Caco-2 (cell line): ENCODE measurements at regions of chr20 and their contacts with region 1.

Region 1: DNA sequence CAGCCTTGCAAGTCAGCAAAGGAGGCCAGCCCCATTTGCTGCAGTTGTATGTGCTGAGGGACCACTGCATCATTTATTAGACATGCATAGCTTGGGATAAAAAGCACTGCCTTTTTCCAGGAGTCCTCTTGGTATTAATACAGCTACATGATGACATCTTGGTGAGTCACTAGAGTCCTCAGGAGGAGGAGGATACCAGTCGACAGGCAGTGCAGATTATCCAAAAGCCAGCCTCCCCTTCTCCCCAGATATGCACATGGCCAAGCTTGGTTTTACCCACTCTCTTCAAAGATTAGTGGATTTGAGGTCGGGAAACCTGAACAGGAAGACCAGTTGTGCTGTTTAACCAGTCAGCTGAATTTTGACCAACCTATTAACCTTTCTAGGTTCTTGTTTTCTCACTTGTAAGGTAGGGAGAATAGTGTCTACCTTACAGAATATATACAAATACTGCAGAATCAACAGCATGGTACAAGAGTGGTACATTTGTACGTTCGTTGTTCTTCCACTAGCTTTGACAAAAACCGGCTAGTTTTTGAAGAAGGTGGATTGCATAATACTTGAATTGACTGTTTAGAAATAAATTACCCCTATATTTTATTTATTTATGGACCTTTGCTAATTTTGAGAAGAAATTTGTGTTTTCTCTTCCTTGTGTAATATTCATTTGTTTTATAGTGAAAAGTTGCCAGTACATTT is 31.9 kb downstream of the VAPB start:
- DNase-seq: peak in 1 of 2 experiments; percentile 28
- H3K4me3 ChIP-seq: no peak overlapping the region
- H3K4me3 Mint-ChIP-seq: peak overlapping the region; percentile 50
- H3K27ac Mint-ChIP-seq: peak overlapping the region; percentile 89
- H3K4me1 ChIP-seq: peaks cover 65% of the 10 kb centered on the region
- H3K4me1 Mint-ChIP-seq: peaks cover 70% of the 10 kb centered on the region
- H3K27me3 ChIP-seq: no peaks in the 10 kb centered on the region
- H3K27me3 Mint-ChIP-seq: no peaks in the 10 kb centered on the region
- CTCF ChIP-seq: no peak

Region 2: GRCh38 chr20:58372806-58373205 is 48.1 kb before region 1 on chr20:
- CTCF ChIA-PET with region 1: interaction called, 5 read pairs
- POLR2A ChIA-PET with region 1: no interaction called
- intact Hi-C with region 1: loop called (anchors 1 kb)
- DNase-seq: peak; percentile 91 to 95
- H3K4me3 ChIP-seq: no peak overlapping the region
- H3K4me3 Mint-ChIP-seq: peak overlapping the region; percentile 49
- H3K27ac Mint-ChIP-seq: peak overlapping the region; percentile 68
- H3K4me1 ChIP-seq: peaks cover 29% of the 10 kb centered on the region
- H3K4me1 Mint-ChIP-seq: peaks cover 37% of the 10 kb centered on the region
- H3K27me3 ChIP-seq: no peaks in the 10 kb centered on the region
- H3K27me3 Mint-ChIP-seq: no peaks in the 10 kb centered on the region
- CTCF ChIP-seq: no peak

Region 3: GRCh38 chr20:58398254-58398653 is 22.7 kb before region 1 on chr20:
- CTCF ChIA-PET with region 1: no interaction called
- POLR2A ChIA-PET with region 1: interaction called, 10 read pairs
- intact Hi-C with region 1: no loop called
- DNase-seq: no peak
- H3K4me3 ChIP-seq: no peak overlapping the region
- H3K4me3 Mint-ChIP-seq: no peak overlapping the region
- H3K27ac Mint-ChIP-seq: no peak overlapping the region
- H3K4me1 ChIP-seq: peaks cover 23% of the 10 kb centered on the region
- H3K4me1 Mint-ChIP-seq: peaks cover 19% of the 10 kb centered on the region
- H3K27me3 ChIP-seq: no peaks in the 10 kb centered on the region
- H3K27me3 Mint-ChIP-seq: no peaks in the 10 kb centered on the region
- CTCF ChIP-seq: no peak

Region 4: GRCh38 chr20:58571693-58572427 is 150.9 kb after region 1 on chr20:
- CTCF ChIA-PET with region 1: no interaction called
- POLR2A ChIA-PET with region 1: no interaction called
- intact Hi-C with region 1: loop called (anchors 1 kb)
- DNase-seq: peak; percentile 73 to 88
- H3K4me3 ChIP-seq: peak overlapping the region; percentile 10; the same call in 1 of the 2 replicates
- H3K4me3 Mint-ChIP-seq: peak overlapping the region; percentile 63
- H3K27ac Mint-ChIP-seq: peak overlapping the region; percentile 90
- H3K4me1 ChIP-seq: peaks cover 44% of the 10 kb centered on the region
- H3K4me1 Mint-ChIP-seq: peaks cover 18% of the 10 kb centered on the region
- H3K27me3 ChIP-seq: no peaks in the 10 kb centered on the region
- H3K27me3 Mint-ChIP-seq: no peaks in the 10 kb centered on the region
- CTCF ChIP-seq: no peak

Region 5: DNA sequence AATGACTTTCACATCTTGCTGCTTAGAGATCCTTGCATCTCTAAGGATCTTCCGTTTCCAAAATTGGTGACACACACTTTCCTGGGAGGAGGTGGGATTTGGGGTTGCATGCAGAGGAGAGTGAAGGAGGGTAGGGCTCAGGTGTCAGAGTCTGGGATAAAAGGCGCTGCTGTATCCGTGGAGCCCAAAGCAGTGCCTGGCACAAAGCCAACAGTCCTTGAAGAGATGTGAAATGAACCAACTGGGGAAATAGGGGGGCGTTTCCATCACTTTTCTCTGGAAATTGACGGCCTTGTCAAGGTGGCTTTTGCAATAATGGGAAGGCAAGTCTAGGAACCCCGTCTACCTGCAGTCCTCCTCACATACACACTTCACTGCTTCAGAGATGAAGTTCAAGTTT is 500.6 kb after region 1 on chr20:
- CTCF ChIA-PET with region 1: no interaction called
- POLR2A ChIA-PET with region 1: no interaction called
- intact Hi-C with region 1: no loop called
- DNase-seq: no peak
- H3K4me3 ChIP-seq: no peak overlapping the region
- H3K4me3 Mint-ChIP-seq: no peak overlapping the region
- H3K27ac Mint-ChIP-seq: no peak overlapping the region
- H3K4me1 ChIP-seq: peaks cover 13% of the 10 kb centered on the region
- H3K4me1 Mint-ChIP-seq: peaks cover 12% of the 10 kb centered on the region
- H3K27me3 ChIP-seq: no peaks in the 10 kb centered on the region
- H3K27me3 Mint-ChIP-seq: no peaks in the 10 kb centered on the region
- CTCF ChIP-seq: no peak